OCI-LY7 (cell line): ENCODE measurements at regions of chrX and their contacts with region 1.

Region 1: DNA sequence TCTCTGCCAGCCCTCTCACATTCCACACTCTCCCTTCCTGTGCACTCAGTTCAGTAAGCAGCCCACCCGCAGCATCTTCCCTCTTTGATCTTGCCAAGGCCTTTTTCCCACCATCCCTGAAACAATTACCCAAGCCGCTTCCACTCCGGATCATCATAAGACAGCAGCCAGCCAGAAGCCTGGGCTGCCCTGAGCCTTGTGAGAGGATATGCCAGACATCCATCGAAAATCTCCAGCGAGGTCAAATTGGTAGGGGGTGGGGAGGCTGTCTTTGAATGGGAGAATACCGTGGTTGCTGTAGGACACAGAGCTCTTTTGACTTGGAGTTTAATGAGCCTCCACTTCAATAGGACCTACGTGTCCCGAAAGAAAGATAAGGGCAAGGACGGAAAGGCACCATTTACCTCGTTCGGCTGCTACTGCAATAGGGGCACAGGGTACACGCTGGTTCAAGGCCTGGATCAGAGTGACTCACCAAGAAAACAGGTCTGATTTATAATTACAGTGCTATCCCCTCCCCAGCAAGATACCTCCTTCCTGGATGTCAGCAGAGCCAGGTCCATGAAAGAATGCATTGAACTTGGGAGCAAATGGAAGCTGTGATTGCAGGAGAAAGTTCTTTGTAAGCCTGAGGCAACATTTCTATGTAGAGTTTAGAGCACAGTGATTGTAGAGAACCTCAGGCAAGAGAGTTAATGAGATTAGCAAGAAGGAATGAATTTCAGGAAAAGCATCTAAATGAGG is 39.5 kb downstream of the AMOT start:
- DNase-seq: no peak
- H3K4me3 ChIP-seq: no peak overlapping the region
- H3K27ac ChIP-seq: no peak overlapping the region
- H3K4me1 ChIP-seq: no peaks in the 10 kb centered on the region
- CTCF ChIP-seq: no peak

Region 2: DNA sequence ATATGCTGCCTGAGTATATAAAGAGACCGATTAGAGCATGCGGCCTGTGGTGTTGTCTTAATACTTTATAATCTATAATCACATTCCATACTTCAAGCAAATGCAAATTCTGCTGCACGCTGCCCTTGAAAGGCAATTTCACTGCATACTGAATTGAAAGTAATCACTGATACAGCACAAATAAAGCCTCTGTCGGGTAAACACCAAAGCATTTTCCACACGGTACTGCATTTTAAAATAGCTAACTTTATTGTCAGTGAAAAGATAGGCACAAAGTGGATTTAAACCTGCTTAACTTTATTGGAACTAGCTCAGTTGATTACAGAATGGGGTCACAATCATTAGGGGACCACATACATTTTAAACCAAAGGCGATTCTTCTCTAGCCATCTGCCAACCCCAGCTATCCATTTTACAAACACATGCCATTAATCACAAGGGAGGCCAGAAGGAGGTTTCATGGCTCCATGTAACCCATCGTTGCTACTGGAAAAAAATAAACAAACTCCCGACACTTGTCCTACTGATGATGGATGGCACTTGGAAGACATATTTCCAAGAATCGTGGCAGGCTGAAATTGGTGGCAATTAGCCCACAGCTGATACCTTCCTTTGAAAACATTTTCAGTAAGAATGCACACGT is 26.4 kb before region 1 on chrX:
- CTCF ChIA-PET with region 1: no interaction called
- POLR2A ChIA-PET with region 1: no interaction called
- intact Hi-C with region 1: loop called (anchors 1 kb)
- DNase-seq: no peak
- H3K4me3 ChIP-seq: no peak overlapping the region
- H3K27ac ChIP-seq: no peak overlapping the region
- H3K4me1 ChIP-seq: no peaks in the 10 kb centered on the region
- CTCF ChIP-seq: no peak